Activated T-helper 1 cell treated with anti-CD3 and anti-CD28 coated beads, Interleukin-12 subunit alpha, Interleukin-12 subunit beta, Interleukin-2, Interleukin-4 antibody, amounts not matched to agents 30 ng/mL and 10 ng/mL and 1 ng/mL, durations not matched to agents 14 hours and 24 hours and 36 hours (primary cell): ENCODE measurements at regions of chr1 and their contacts with region 1.

Region 1: DNA sequence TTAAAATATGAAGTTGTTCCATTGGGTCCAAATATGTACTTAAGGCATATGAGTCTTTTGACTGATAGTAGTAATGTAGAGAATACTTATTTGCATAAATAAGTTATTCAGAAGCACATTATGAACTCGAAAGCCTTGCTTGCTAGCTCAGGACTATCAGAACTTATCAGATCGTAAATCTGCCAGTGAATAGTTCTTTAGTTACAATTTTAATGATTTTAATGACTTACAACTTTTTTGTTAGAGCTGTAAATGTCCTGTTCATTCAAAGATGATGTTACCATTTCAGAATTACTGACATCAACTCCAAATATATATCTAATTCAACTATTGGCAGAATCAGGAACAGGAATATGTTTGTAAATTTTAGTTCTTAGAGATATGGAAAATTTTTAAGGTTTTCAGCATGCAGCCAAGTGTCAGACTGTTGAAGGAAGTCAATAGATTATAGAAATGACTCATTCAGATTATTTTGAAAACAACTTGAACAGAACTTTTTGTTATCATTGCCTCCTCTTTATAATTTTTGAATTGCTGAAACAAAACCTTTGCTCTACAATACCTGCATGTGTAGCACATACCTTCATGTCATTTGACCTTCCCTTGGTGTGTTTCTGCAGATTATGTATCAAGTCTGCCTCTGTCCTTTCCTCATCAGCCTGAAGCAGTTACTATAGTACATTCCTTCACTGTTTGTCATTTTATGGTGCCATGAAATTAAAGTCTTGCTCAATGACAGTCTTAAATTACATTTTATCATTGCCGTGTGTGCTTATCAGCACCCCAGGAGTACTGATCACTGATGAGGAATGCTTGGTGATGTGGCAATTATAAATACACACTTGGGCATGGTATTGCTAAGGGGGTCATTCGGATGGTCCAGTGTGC is 44.9 kb downstream of the LRRC8D start:
- DNase-seq: no peak
- H3K4me3 Mint-ChIP-seq: no peak overlapping the region
- H3K27ac Mint-ChIP-seq: peak overlapping the region; percentile 25
- H3K4me1 Mint-ChIP-seq: peaks cover 68% of the 10 kb centered on the region
- H3K27me3 Mint-ChIP-seq: no peaks in the 10 kb centered on the region

Region 2: DNA sequence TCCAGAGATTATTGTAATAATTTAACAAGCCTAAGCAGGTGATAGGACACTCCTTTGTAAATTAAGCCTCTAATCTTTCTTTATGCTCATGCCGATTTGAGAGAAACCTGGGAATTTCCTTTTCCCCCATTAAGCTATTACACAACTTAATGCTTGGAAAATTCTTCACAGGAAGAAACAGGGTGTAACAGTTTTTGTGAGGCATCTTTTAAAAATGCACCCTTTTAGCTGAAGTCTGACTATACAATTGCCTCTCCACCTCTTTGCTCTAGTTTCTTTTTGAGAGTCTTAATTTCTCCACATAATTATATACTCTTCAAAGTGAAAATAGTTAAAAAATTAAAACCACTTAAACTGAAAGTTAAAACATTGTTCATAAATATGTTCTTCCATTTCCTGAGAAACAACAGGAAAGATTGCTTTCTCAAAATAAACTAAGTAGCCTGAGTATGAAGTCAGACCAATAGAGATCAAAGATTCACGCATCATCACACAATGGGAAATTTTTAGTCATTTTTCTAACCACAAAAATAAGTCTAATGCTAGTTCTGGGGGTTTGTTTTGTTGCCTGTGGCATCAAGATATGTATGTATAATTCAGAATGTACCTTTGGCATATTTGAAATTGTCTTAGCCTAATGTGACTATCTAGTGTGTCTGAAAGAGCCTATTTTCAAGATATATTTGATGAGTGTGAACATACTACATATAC is 10.2 kb before region 1 on chr1:
- intact Hi-C with region 1: loop called (anchors 1 kb)
- DNase-seq: no peak
- H3K4me3 Mint-ChIP-seq: no peak overlapping the region
- H3K27ac Mint-ChIP-seq: no peak overlapping the region
- H3K4me1 Mint-ChIP-seq: peaks cover 4% of the 10 kb centered on the region
- H3K27me3 Mint-ChIP-seq: no peaks in the 10 kb centered on the region

Region 3: DNA sequence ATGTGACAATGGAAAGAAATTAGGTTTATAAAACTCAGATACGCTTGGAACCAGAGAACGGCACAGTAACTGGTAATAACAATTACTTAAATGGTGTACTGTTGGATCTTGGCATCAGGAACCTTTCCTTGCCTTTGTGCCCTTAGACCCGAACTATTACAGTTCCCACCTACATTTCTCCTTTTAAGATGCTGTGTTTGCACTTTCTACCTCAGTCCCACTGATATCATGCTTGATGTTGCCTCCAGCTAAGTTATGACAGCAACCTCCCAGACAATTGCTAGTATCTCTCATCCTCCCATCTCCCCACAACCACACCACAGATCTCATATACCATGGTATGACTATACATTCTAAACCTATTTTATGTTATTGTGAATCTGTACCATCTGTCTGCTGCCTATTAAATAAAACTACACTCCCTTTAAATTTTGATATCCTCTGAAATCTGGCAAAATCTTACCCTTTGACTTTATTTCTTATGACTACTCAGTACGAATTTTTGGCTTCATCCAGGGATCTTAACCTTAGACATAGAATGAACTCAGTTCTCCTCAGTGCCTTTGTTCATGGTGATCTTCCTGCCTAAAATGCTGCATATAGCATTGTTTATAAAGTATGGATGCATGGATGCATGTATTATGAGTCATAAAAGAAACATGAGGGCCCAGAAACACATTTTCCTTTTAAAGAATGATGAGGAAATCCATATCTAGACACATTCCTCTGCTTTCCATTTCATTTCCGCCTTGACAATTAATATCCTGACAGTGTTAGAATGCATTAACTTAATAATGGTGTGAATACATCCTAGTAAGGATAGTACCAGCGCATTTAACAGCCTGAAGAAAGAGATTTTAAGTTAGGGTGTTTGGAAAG is 19.2 kb after region 1 on chr1:
- intact Hi-C with region 1: loop called (anchors 2 kb)
- DNase-seq: no peak
- H3K4me3 Mint-ChIP-seq: no peak overlapping the region
- H3K27ac Mint-ChIP-seq: no peak overlapping the region
- H3K4me1 Mint-ChIP-seq: peaks cover 17% of the 10 kb centered on the region
- H3K27me3 Mint-ChIP-seq: no peaks in the 10 kb centered on the region

Region 4: DNA sequence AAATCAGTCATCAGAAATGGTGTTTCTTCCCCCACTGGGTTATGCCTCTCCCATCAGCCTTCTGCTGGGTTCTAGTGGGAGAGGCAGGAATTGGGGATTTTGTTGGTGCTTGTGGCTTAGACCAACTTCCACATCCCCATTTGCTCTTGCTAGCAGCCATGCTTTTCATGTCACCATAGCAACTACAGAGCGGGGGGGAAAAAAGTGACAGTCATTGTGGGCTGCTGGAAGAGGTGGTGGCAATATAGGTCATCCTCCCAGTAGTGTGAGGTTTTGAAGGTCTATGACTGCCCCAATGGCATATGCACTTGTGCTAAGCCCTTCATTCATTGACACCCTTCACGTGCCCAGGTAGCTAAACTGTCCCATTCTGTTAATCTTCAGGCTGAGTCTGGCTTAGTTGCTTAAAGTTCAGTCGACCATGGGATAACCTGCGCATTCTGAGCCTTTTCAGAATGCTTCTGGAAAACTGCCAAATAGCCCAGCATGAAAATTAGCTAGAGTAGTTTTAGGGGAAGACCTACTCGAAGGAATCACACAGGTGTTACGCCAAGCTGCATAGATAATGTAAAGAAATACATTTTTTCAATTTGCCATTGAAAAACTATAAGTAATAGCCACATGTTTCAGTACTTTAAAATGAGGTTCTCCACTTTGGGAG is 75.5 kb after region 1 on chr1:
- intact Hi-C with region 1: no loop called
- DNase-seq: no peak
- H3K4me3 Mint-ChIP-seq: no peak overlapping the region
- H3K27ac Mint-ChIP-seq: no peak overlapping the region
- H3K4me1 Mint-ChIP-seq: peaks cover 3% of the 10 kb centered on the region
- H3K27me3 Mint-ChIP-seq: no peaks in the 10 kb centered on the region

Region 5: DNA sequence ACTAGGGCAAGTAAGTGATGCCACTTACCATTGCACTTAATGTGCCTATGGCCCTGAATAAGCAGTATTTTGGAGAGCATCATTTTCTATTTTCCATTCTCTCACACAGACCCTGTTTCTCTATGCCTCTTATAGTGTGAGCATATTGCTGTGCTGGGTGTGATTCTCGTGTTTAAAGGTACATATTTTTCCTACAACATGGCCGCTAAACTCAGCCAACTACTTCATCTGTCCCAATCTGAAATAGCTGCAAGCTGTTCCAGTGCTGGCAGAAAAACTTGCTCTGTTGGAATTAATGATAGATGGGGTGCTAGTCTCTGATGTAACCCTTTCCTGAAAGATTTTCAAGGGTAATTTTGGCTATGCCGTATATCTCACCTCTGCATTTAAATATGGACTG is 226.7 kb after region 1 on chr1:
- intact Hi-C with region 1: no loop called
- DNase-seq: no peak
- H3K4me3 Mint-ChIP-seq: no peak overlapping the region
- H3K27ac Mint-ChIP-seq: no peak overlapping the region
- H3K4me1 Mint-ChIP-seq: no peaks in the 10 kb centered on the region
- H3K27me3 Mint-ChIP-seq: peaks cover 7% of the 10 kb centered on the region

Region 6: DNA sequence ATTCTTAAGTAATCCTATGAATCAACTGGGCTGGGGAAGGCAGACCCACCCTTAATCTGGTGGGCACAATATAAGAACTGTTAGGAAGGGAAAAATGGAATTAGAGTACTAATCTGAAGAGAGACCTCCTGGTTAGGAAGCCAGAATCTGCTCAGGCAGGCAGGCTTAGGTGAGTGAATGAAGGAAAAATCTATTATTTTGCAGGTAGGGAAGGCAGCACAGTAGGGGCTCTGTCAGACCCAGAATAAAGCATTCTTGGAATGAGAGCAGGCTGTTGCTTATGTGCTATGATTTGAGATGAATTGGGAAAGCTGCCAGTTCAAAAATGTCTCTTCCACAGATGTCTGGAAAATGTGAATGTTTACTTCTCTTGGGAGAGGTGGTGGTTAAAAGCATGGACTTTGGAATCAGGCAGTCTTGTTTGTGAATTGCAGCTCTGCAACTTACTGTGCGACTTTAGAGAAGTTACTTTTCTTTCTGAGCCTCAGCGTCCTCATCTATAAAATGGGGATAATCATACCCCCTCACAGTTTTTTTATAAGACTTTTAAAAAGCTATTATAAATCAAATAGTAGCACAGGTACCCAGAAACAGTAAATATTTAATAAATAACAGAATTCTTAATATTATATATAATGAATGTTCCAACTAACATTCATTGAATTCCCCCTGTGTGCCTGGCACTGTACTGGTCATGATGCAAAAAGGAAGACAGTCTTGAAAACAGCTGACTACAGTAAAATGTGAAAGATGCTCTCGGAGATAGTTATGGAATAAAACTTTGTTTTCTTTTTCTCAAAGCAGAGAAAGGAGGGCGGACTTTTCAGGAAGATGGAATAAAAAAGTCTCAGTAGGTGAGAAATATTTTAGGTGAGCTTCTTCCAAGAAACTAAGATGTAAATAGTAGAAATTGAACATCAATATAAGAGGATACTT is 1171.4 kb after region 1 on chr1:
- intact Hi-C with region 1: no loop called
- DNase-seq: no peak
- H3K4me3 Mint-ChIP-seq: no peak overlapping the region
- H3K27ac Mint-ChIP-seq: no peak overlapping the region
- H3K4me1 Mint-ChIP-seq: no peaks in the 10 kb centered on the region
- H3K27me3 Mint-ChIP-seq: peaks cover 8% of the 10 kb centered on the region